Endothelial cell of umbilical vein (primary cell): ENCODE measurements at regions of chr4 and their contacts with region 1.

Region 1: DNA sequence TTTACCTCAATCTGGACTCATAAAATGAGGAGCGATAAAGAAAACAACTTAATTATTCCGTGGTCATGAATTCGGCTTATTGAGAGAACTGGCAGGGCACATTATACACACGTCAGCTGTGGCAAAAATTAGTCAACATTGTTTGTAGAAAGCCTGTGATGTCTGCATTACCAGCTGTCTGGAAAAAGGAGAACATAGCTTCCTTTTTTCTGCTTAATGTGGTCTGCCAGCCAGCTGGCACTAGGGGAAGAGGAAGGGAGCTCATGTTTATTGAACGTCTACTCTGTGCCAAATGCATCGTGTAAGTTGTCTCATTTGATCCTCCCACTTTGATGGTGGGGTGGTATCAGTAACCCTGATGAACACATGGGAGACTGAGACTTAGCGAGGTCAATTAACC is 367.6 kb downstream of the ARHGAP24 start:
- DNase-seq: peak; percentile 96
- H3K4me3 ChIP-seq: peak overlapping the region in 1 of 3 experiments; percentile 29
- H3K27ac ChIP-seq: peak overlapping the region; percentile 95
- H3K4me1 ChIP-seq: peaks cover 24% of the 10 kb centered on the region
- H3K27me3 ChIP-seq: no peaks in the 10 kb centered on the region
- CTCF ChIP-seq: no peak
- POLR2A ChIP-seq: no peak

Region 2: GRCh38 chr4:85302756-85303155 is 539.8 kb before region 1 on chr4:
- CTCF ChIA-PET with region 1: no interaction called
- POLR2A ChIA-PET with region 1: no interaction called
- dilution Hi-C with region 1: no loop called
- intact Hi-C with region 1: no loop called
- DNase-seq: no peak
- H3K4me3 ChIP-seq: no peak overlapping the region
- H3K27ac ChIP-seq: no peak overlapping the region
- H3K4me1 ChIP-seq: no peaks in the 10 kb centered on the region
- H3K27me3 ChIP-seq: peaks cover 2 to 4% of the 10 kb centered on the region in 2 experiments
- CTCF ChIP-seq: no peak
- POLR2A ChIP-seq: no peak

Region 3: GRCh38 chr4:85642356-85643100 is 200.0 kb before region 1 on chr4:
- CTCF ChIA-PET with region 1: no interaction called
- POLR2A ChIA-PET with region 1: no interaction called
- dilution Hi-C with region 1: no loop called
- intact Hi-C with region 1: no loop called
- DNase-seq: no peak
- H3K4me3 ChIP-seq: no peak overlapping the region
- H3K27ac ChIP-seq: no peak overlapping the region
- H3K4me1 ChIP-seq: no peaks in the 10 kb centered on the region
- H3K27me3 ChIP-seq: peaks cover 3 to 10% of the 10 kb centered on the region in 2 experiments
- CTCF ChIP-seq: no peak
- POLR2A ChIP-seq: no peak

Region 4: GRCh38 chr4:85761803-85762528 is 80.6 kb before region 1 on chr4:
- CTCF ChIA-PET with region 1: no interaction called
- POLR2A ChIA-PET with region 1: no interaction called
- dilution Hi-C with region 1: no loop called
- intact Hi-C with region 1: loop called (anchors 1 kb)
- DNase-seq: peak; percentile 99
- H3K4me3 ChIP-seq: peak overlapping the region in 2 of 3 experiments; percentile 21 to 60
- H3K27ac ChIP-seq: peak overlapping the region; percentile 90
- H3K4me1 ChIP-seq: peaks cover 53% of the 10 kb centered on the region
- H3K27me3 ChIP-seq: no peaks in the 10 kb centered on the region
- CTCF ChIP-seq: no peak
- POLR2A ChIP-seq: no peak

Region 5: DNA sequence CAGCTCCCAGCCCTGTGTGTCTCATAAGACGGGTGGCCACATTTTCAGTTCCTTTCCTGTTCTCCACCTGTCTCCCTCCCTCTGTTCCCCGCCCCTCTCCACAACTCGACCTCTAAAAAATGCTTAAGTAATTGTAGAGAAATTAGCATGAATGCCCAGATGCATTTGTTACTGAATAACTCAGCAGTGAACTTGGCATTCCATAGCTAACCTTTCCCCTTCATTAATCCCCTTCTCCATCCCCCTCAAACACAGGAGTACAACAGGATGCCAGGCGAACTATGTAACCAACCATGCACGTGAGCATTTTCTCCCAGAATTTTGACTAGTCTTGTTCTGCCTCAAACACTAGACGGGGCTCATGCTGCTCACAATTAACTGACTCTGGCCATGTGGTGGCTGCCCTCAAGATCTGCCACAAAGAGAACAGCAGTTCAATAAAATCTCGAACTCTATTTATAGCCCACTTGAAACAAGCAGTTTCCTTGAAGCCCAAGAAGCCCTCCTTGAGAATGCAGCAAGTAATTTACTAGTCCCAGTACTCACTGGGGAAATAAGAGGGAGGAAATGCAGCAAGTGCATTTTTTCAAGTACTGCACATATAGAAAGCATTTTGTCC is 16.4 kb before region 1 on chr4:
- CTCF ChIA-PET with region 1: interaction called, 5 read pairs
- POLR2A ChIA-PET with region 1: interaction called, 5 read pairs
- dilution Hi-C with region 1: no loop called
- intact Hi-C with region 1: loop called (anchors 1 kb)
- DNase-seq: peak; percentile 66
- H3K4me3 ChIP-seq: no peak overlapping the region
- H3K27ac ChIP-seq: peak overlapping the region; percentile 48
- H3K4me1 ChIP-seq: peaks cover 52% of the 10 kb centered on the region
- H3K27me3 ChIP-seq: no peaks in the 10 kb centered on the region
- CTCF ChIP-seq: no peak
- POLR2A ChIP-seq: no peak

Region 6: GRCh38 chr4:86032476-86033022 is 190.0 kb after region 1 on chr4:
- CTCF ChIA-PET with region 1: no interaction called
- POLR2A ChIA-PET with region 1: no interaction called
- dilution Hi-C with region 1: no loop called
- intact Hi-C with region 1: loop called (anchors 1 kb)
- DNase-seq: no peak
- H3K4me3 ChIP-seq: no peak overlapping the region
- H3K27ac ChIP-seq: peak overlapping the region; percentile 50
- H3K4me1 ChIP-seq: peaks cover 40% of the 10 kb centered on the region
- H3K27me3 ChIP-seq: no peaks in the 10 kb centered on the region
- CTCF ChIP-seq: no peak
- POLR2A ChIP-seq: no peak